ENCODE measurements at regions of chr1 and their contacts with region 1.

Region 1: DNA sequence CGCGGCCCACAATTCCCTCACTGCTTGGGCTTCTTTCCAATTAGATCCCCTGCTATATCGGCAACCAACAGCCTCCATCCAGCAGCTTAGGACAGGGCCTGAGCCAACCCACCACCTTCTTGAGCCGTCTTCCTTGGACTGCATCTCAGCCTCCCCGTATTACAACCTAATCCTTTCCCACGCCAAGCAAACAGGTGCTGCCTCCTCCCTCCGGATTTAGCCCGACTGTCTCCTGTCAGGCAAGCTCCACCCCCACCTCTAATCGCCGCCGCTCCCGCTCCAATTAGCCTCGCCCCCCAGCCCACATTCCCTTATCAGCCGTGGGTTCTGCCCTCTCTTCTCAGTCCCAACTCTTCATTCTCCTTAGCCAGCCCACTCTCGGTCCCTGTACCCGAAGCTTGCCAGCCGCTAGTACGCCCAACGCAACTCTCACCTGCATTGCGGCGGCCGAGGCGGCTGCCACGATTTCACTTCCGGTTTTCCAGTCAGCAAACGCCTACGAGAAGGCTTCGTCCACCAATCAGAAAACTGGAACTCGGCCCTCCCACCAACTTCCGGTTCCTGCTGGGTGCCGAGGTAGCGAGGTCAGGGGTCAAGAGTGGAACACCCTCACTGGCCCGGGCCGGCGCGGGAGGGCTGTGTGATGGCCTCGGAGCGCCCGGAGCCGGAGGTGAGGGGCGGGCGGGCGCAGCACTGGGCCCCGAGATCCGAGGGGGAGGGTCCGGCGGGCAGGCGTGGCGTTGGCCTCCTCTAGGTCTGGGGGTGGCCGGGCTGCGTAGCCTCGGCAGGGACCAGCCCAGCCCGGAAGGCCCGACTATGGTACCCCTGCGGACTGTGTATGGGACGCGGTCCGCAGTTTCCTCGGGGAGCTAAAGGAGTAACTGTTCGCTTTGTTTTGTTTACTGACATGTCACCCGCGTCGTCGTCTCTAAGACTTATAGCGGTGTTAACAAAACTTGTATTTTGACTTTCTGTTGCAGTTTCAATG is at the starts of genes MED8 and SZT2:
- DNase-seq: peak; percentile 96
- H3K4me3 Mint-ChIP-seq: peak within 1 kb of the TSS; percentile 91
- H3K27ac Mint-ChIP-seq: peak within 1 kb of the TSS; percentile 95
- H3K4me1 Mint-ChIP-seq: peaks cover 31% of the 10 kb centered on the region
- H3K27me3 Mint-ChIP-seq: no peaks in the 10 kb centered on the region
- CTCF ChIP-seq: no peak
- total RNA-seq, gene MED8: 52.0 and 61.6 TPM in 2 replicates
- total RNA-seq, gene SZT2: 65.3 and 67.4 TPM in 2 replicates

Region 2: DNA sequence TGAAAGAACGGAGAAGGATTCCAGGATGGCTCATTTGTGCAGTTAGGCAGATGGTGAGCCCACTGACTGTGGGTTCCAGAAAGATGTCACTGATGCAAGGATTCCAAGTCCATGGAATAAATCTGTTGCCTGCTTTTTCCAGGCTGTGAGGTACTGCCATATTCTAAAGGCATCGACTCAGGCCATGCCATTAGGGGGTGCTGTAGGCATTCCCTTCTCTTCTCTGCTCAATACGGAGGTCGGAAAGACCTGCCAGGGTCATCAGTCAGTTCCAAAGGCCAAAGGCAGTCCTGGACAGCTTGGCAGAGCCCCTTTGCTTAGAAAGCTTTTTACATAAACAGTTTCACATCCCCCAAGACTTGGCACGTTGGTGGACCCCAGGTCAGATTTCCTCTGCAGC is 151.5 kb before region 1 on chr1:
- CTCF ChIA-PET with region 1: interaction called, 3 read pairs
- POLR2A ChIA-PET with region 1: interaction called, 18 read pairs
- intact Hi-C with region 1: loop called (anchors 10 kb)
- DNase-seq: peak; percentile 78
- H3K4me3 Mint-ChIP-seq: no peak overlapping the region
- H3K27ac Mint-ChIP-seq: peak overlapping the region; percentile 3
- H3K4me1 Mint-ChIP-seq: peaks cover 21% of the 10 kb centered on the region
- H3K27me3 Mint-ChIP-seq: no peaks in the 10 kb centered on the region
- CTCF ChIP-seq: peak; percentile 53

Region 3: DNA sequence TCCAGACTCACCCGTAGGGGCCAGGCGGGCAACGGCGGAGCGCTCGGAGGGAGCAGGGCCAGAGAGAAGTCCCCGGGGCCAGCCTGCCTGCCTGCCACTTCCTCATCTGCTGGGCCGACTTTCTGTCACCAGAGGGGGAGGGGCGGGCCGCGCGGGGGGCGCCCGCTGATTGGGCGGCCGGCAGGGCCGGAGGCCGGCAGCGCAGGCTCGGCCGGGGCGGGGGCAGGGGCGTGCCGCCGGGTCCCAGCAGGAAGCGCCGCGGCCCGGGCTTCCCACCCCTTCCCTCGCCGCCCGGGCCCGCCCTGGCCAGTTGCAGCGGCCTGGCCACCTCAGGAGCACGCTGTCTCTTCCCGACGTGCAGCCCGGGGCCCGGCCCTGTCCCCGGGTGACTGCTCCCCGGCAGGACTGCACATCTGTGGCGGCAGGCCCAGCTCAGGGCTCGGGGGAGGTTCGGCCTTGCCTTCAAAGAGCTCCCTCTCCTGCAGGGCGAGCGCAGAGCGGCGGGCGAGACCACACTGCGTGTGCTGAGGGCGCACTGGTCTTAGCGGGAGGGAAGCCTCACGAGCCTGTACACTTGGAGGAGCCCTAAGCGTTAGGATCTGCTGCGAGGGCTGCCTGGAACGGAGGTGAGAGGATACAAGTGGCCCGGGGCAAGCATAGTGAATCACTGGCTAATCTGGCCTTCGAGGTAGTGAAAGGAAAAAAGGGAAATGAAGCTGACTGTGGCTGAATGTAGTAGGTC is 21.5 kb before region 1 on chr1 and contains the start of gene ELOVL1:
- CTCF ChIA-PET with region 1: interaction called, 6 read pairs
- POLR2A ChIA-PET with region 1: interaction called, 69 read pairs
- intact Hi-C with region 1: loop called (anchors 1 kb)
- DNase-seq: peak; percentile 85
- H3K4me3 Mint-ChIP-seq: peak within 1 kb of the TSS; percentile 87
- H3K27ac Mint-ChIP-seq: peak within 1 kb of the TSS; percentile 84
- H3K4me1 Mint-ChIP-seq: peaks cover 33% of the 10 kb centered on the region
- H3K27me3 Mint-ChIP-seq: no peaks in the 10 kb centered on the region
- CTCF ChIP-seq: no peak
- total RNA-seq, gene ELOVL1: 86.0 and 99.9 TPM in 2 replicates

Region 4: DNA sequence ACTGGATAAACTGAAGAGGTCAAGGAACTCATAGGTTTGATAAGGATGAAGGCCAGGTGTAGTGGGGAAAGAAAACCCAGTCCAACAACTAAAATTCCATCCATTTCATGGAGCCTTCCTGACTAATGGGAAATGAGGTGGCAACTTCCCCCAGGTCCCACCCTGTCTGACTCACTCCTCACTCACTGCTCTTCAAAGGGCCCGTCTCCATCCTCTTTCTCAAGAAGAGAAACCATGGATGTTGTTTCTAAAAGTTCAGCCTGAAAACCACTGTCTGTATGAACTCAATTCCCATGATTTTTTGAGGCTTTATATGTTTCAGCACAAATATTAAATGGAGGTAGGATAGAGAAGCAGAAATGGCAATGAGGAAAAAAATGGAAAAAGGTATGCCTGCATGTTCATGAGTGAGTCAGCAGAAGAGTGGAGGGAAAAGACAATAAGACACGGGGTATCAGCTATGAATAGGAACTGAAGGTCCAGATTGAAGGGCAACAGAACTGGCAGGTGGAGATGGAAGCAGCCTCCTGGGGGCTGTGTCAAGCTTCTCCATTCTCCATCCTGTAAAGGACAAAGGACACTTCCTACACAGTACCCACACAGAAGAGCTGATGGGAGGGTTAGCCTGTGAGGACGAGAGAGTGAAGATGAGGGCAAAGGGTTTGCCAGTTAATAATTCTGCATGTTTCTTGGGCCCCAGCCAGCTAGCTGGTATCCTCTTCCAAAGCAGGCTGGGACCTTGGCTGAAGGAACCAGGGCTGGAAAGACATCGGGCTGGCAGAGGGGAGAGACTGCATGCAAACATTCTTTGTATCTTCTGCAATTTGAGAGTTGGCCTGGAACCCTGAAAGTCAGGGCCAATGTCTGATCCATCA is 16.3 kb before region 1 on chr1:
- CTCF ChIA-PET with region 1: interaction called, 6 read pairs
- POLR2A ChIA-PET with region 1: interaction called, 69 read pairs
- intact Hi-C with region 1: loop called (anchors 1 kb)
- DNase-seq: peak; percentile 89
- H3K4me3 Mint-ChIP-seq: no peak overlapping the region
- H3K27ac Mint-ChIP-seq: no peak overlapping the region
- H3K4me1 Mint-ChIP-seq: peaks cover 10% of the 10 kb centered on the region
- H3K27me3 Mint-ChIP-seq: no peaks in the 10 kb centered on the region
- CTCF ChIP-seq: no peak

Measured in MCF 10A (cell line).